ENCODE measurements at regions of chr6 and their contacts with region 1.

Region 1: GRCh38 chr6:26473758-26474438 is 16.1 kb downstream of the BTN2A1 start:
- DNase-seq: peak; percentile 95
- H3K4me3 ChIP-seq: peak overlapping the region; percentile 42 to 62 (median 57)
- H3K27ac ChIP-seq: peak overlapping the region; percentile 89 to 94 (median 89)
- H3K4me1 ChIP-seq: peaks cover 15 to 26% (median 22%) of the 10 kb centered on the region in 4 donors
- H3K27me3 ChIP-seq: no peaks in the 10 kb centered on the region
- CTCF ChIP-seq: no peak
- EP300 ChIP-seq: no peak
- POLR2A ChIP-seq: peak; percentile 31

Region 2: GRCh38 chr6:26312501-26313390 is 161.2 kb before region 1 on chr6:
- intact Hi-C with region 1: no loop called
- DNase-seq: peak; percentile 97
- H3K4me3 ChIP-seq: peak overlapping the region; percentile 50 to 62 (median 52)
- H3K27ac ChIP-seq: peak overlapping the region; percentile 52 to 73 (median 62)
- H3K4me1 ChIP-seq: peaks cover 7 to 25% (median 17%) of the 10 kb centered on the region in 4 donors
- H3K27me3 ChIP-seq: peaks cover 0 to 11% (median 0%) of the 10 kb centered on the region in 4 donors
- CTCF ChIP-seq: no peak
- EP300 ChIP-seq: no peak
- POLR2A ChIP-seq: no peak

Region 3: GRCh38 chr6:26421259-26422144 is 52.4 kb before region 1 on chr6:
- intact Hi-C with region 1: loop called (anchors 5 kb)
- DNase-seq: peak; percentile 95
- H3K4me3 ChIP-seq: peak overlapping the region; percentile 66 to 88 (median 78)
- H3K27ac ChIP-seq: peak overlapping the region; percentile 80 to 95 (median 84)
- H3K4me1 ChIP-seq: peaks cover 21 to 50% (median 31%) of the 10 kb centered on the region in 4 donors
- H3K27me3 ChIP-seq: no peaks in the 10 kb centered on the region
- CTCF ChIP-seq: no peak
- EP300 ChIP-seq: no peak
- POLR2A ChIP-seq: no peak

Region 4: DNA sequence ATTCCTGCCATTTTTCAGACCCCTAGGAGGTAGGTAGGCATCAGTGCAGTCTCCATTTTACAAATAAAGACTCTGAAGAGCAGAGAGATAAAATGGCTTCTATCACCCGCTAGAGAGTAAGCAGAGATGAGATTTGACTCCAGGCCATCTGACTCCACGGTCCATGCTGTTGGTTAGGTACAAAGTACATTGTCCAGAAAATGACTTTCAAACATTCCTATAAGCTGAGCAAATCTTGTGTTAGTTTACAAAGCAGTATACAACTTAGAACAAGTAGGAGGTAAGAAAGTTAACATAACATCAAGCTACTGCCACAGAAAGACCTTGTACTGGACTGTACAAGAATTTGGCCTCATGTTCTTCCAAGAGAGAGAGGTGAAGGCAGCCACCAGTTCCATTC is 41.1 kb after region 1 on chr6:
- intact Hi-C with region 1: loop called (anchors 5 kb)
- DNase-seq: no peak
- H3K4me3 ChIP-seq: no peak overlapping the region
- H3K27ac ChIP-seq: no peak overlapping the region
- H3K4me1 ChIP-seq: peaks cover under 1% of the 10 kb centered on the region in 4 donors
- H3K27me3 ChIP-seq: no peaks in the 10 kb centered on the region
- CTCF ChIP-seq: no peak
- EP300 ChIP-seq: no peak
- POLR2A ChIP-seq: no peak